Activated B cell treated with CpG ODN at 0.5 μM for 24 hours (primary cell): ENCODE measurements at regions of chr2 and their contacts with region 1.

Region 1: GRCh38 chr2:197786010-197786877 is 1.1 kb upstream of the BOLL start:
- DNase-seq: peak; percentile 40
- ATAC-seq: peak; percentile 72
- H3K4me3 Mint-ChIP-seq: peak overlapping the region; percentile 71
- H3K27ac Mint-ChIP-seq: no peak overlapping the region
- H3K4me1 Mint-ChIP-seq: no peaks in the 10 kb centered on the region
- H3K27me3 Mint-ChIP-seq: peaks cover 37% of the 10 kb centered on the region
- CTCF ChIP-seq: no peak

Region 2: GRCh38 chr2:197804049-197804757 is 18.0 kb after region 1 on chr2 and contains the start of gene PLCL1:
- CTCF ChIA-PET with region 1: no interaction called
- POLR2A ChIA-PET with region 1: no interaction called
- intact Hi-C with region 1: loop called (anchors 1 kb)
- DNase-seq: peak; percentile 49
- ATAC-seq: peak; percentile 98
- H3K4me3 Mint-ChIP-seq: peak within 1 kb of the TSS; percentile 83
- H3K27ac Mint-ChIP-seq: no peak within 1 kb of the TSS
- H3K4me1 Mint-ChIP-seq: peaks cover 15% of the 10 kb centered on the region
- H3K27me3 Mint-ChIP-seq: peaks cover 51% of the 10 kb centered on the region
- CTCF ChIP-seq: no peak
- total RNA-seq, gene PLCL1: 0.04 TPM in 1 of 2 replicates, not detected in the other

Region 3: GRCh38 chr2:197814526-197814925 is 28.3 kb after region 1 on chr2:
- CTCF ChIA-PET with region 1: no interaction called
- POLR2A ChIA-PET with region 1: no interaction called
- intact Hi-C with region 1: no loop called
- DNase-seq: no peak
- ATAC-seq: no peak
- H3K4me3 Mint-ChIP-seq: no peak overlapping the region
- H3K27ac Mint-ChIP-seq: no peak overlapping the region
- H3K4me1 Mint-ChIP-seq: no peaks in the 10 kb centered on the region
- H3K27me3 Mint-ChIP-seq: peaks cover 34% of the 10 kb centered on the region
- CTCF ChIP-seq: no peak